ENCODE measurements at regions of chr6 and their contacts with region 1.

Region 1: DNA sequence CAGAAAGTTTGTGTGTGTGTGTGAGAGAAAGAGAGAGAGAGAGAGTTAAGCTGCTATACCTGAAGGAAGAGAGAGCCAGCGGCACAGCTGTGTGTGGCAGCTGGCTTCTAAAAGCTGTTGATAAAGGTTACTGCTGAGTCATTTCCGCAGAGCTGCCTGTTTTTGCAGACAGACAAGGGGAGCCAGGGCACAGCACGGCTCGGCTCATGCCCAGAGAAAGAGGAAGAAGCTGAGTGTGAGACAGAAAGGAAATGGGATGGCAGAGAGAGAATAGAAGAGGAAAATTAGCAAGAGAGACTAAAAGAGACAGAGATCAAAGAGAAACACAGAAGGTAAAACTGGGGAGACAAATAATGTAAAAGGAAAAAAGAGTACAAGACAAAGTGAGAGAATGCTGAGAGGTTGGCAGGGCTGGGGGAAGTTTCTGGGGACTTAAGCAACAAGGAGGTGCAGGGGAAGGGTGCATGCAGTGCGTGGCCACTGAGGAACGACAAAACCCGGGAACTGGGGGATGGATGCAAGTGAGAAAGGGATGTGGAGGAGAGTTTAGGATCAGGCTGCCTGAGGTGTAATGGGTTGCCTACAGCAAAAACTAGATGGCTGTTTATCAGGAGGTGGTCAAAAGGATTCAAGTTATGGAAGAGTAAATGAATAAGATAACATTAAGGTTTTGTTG is 22.7 kb downstream of the HLA-A start:
- DNase-seq: peak in 8 of 9 donors; percentile 55 to 89 (median 82)
- ATAC-seq: peak; percentile 97
- H3K4me3 ChIP-seq: peak overlapping the region; percentile 52
- H3K4me3 Mint-ChIP-seq: peak overlapping the region; percentile 73 to 96 (median 84)
- H3K27ac ChIP-seq: peak overlapping the region; percentile 52
- H3K27ac Mint-ChIP-seq: peak overlapping the region; percentile 77 to 94 (median 90)
- H3K4me1 ChIP-seq: peaks cover 22 to 30% of the 10 kb centered on the region in 2 donors
- H3K4me1 Mint-ChIP-seq: peaks cover 32 to 51% (median 46%) of the 10 kb centered on the region in 7 donors
- H3K27me3 ChIP-seq: no peaks in the 10 kb centered on the region
- H3K27me3 Mint-ChIP-seq: peaks cover 0 to 2% (median 0%) of the 10 kb centered on the region in 5 donors

Region 2: GRCh38 chr6:29705389-29706231 is 259.4 kb before region 1 on chr6:
- CTCF ChIA-PET with region 1: no interaction called
- POLR2A ChIA-PET with region 1: interaction called, 5 read pairs
- intact Hi-C with region 1: loop called (anchors 1 to 5 kb)
- DNase-seq: peak in 4 of 9 donors; percentile 41 to 60 (median 43)
- ATAC-seq: no peak
- H3K4me3 ChIP-seq: no peak overlapping the region
- H3K4me3 Mint-ChIP-seq: peak overlapping the region in 6 of 10 donors; percentile 20 to 77 (median 42)
- H3K27ac ChIP-seq: peak overlapping the region; percentile 2
- H3K27ac Mint-ChIP-seq: peak overlapping the region in 8 of 9 donors; percentile 16 to 95 (median 82)
- H3K4me1 ChIP-seq: peaks cover 47 to 54% of the 10 kb centered on the region in 2 donors
- H3K4me1 Mint-ChIP-seq: peaks cover 21 to 59% (median 51%) of the 10 kb centered on the region in 7 donors
- H3K27me3 ChIP-seq: no peaks in the 10 kb centered on the region
- H3K27me3 Mint-ChIP-seq: peaks cover 4 to 37% (median 8%) of the 10 kb centered on the region in 5 donors

Region 3: DNA sequence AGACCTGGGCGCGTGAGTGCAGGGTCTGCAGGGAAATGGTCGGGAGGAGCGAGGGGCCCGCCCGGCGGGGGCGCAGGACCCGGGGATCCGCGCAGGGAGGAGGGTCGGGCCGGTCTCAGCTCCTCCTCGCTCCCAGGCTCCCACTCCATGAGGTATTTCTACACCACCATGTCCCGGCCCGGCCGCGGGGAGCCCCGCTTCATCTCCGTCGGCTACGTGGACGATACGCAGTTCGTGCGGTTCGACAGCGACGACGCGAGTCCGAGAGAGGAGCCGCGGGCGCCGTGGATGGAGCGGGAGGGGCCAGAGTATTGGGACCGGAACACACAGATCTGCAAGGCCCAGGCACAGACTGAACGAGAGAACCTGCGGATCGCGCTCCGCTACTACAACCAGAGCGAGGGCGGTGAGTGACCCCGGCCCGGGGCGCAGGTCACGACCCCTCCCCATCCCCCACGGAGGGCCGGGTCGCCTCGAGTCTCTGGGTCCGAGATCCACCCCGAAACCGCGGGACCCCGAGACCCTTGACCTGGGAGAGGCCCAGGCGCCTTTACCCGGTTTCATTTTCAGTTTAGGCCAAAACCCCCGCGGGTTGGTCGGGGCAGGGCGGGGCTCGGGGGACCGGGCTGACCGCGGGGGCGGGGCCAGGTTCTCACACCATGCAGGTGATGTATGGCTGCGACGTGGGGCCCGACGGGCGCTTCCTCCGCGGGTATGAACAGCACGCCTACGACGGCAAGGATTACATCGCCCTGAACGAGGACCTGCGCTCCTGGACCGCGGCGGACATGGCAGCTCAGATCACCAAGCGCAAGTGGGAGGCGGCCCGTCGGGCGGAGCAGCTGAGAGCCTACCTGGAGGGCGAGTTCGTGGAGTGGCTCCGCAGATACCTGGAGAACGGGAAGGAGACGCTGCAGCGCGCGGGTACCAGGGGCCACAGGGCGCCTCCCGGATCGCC is 76.9 kb before region 1 on chr6:
- CTCF ChIA-PET with region 1: interaction called, 3 read pairs
- POLR2A ChIA-PET with region 1: interaction called, 11 read pairs
- intact Hi-C with region 1: loop called (anchors 1 kb)
- DNase-seq: peak in 8 of 9 donors; percentile 36 to 89 (median 72)
- ATAC-seq: peak; percentile 91
- H3K4me3 ChIP-seq: peak overlapping the region; percentile 73
- H3K4me3 Mint-ChIP-seq: peak overlapping the region in 9 of 10 donors; percentile 79 to 95 (median 94)
- H3K27ac ChIP-seq: peak overlapping the region; percentile 94
- H3K27ac Mint-ChIP-seq: peak overlapping the region in 8 of 9 donors; percentile 72 to 98 (median 94)
- H3K4me1 ChIP-seq: peaks cover 3 to 7% of the 10 kb centered on the region in 2 donors
- H3K4me1 Mint-ChIP-seq: peaks cover 0 to 27% (median 20%) of the 10 kb centered on the region in 7 donors
- H3K27me3 ChIP-seq: no peaks in the 10 kb centered on the region
- H3K27me3 Mint-ChIP-seq: peaks cover 0 to 18% (median 0%) of the 10 kb centered on the region in 5 donors

Region 4: DNA sequence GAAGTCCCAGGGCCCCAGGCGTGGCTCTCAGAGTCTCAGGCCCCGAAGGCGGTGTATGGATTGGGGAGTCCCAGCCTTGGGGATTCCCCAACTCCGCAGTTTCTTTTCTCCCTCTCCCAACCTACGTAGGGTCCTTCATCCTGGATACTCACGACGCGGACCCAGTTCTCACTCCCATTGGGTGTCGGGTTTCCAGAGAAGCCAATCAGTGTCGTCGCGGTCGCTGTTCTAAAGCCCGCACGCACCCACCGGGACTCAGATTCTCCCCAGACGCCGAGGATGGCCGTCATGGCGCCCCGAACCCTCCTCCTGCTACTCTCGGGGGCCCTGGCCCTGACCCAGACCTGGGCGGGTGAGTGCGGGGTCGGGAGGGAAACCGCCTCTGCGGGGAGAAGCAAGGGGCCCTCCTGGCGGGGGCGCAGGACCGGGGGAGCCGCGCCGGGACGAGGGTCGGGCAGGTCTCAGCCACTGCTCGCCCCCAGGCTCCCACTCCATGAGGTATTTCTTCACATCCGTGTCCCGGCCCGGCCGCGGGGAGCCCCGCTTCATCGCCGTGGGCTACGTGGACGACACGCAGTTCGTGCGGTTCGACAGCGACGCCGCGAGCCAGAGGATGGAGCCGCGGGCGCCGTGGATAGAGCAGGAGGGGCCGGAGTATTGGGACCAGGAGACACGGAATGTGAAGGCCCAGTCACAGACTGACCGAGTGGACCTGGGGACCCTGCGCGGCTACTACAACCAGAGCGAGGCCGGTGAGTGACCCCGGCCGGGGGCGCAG is 22.6 kb before region 1 on chr6 and contains the start of gene HLA-A:
- CTCF ChIA-PET with region 1: interaction called, 7 read pairs
- POLR2A ChIA-PET with region 1: interaction called, 251 read pairs
- intact Hi-C with region 1: loop called (anchors 1 kb)
- DNase-seq: peak; percentile 76 to 97 (median 92)
- ATAC-seq: peak; percentile 91
- H3K4me3 ChIP-seq: peak within 1 kb of the TSS; percentile 98
- H3K4me3 Mint-ChIP-seq: peak within 1 kb of the TSS; percentile 87 to 99 (median 97)
- H3K27ac ChIP-seq: peak within 1 kb of the TSS; percentile 99
- H3K27ac Mint-ChIP-seq: peak within 1 kb of the TSS; percentile 99 to 100 (median 100)
- H3K4me1 ChIP-seq: peaks cover 24 to 35% of the 10 kb centered on the region in 2 donors
- H3K4me1 Mint-ChIP-seq: peaks cover 32 to 52% (median 47%) of the 10 kb centered on the region in 7 donors
- H3K27me3 ChIP-seq: no peaks in the 10 kb centered on the region
- H3K27me3 Mint-ChIP-seq: peaks cover 0 to 6% (median 0%) of the 10 kb centered on the region in 5 donors
- total RNA-seq, gene HLA-A: 1,540 to 2,258 (median 1,836) TPM

Region 5: DNA sequence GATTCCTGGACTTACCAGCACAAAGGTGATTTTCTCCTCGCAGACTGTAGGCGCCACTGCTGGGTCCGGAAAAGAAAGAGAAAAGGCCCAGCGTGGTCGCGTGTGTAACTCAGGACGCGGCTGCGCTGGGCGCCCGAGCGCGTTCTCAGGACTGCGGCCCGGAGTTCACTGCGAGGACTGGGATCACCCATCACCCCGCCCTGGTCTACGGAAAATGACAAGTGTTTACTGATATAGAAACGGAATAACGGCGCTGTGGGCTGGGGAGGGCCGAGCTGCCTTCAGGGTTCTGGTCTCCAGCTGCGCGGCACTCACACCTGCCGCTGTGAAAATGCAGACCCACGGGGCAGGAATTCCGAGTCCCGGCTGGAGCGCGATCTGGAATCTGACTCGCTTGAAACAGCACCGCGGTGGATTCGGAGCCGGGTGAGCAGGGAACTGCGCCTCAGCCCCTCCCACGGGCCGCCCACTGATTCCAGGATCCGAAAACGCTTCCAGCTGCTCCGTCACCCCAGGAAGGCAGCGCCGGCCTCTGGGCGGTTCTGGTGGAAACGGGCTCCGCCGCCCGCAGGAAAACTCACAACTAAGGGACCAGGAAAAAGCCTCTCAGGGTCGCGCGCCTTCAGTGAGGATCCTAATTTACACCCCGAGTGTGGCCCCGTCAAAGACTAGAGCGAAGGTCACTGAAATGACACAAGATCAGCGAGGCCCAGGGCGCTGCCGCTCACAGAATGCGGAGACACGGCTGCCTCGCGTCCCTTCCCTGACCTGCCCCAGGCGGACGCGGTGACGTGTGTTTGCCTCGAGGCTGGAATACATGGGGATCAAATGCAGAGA is 11.8 kb after region 1 on chr6:
- CTCF ChIA-PET with region 1: interaction called, 4 read pairs
- POLR2A ChIA-PET with region 1: interaction called, 28 read pairs
- intact Hi-C with region 1: loop called (anchors 1 kb)
- DNase-seq: peak in 8 of 9 donors; percentile 27 to 60 (median 42)
- ATAC-seq: peak; percentile 87
- H3K4me3 ChIP-seq: peak overlapping the region; percentile 60
- H3K4me3 Mint-ChIP-seq: peak overlapping the region; percentile 87 to 96 (median 92)
- H3K27ac ChIP-seq: no peak overlapping the region
- H3K27ac Mint-ChIP-seq: peak overlapping the region in 4 of 9 donors; percentile 0 to 51 (median 26)
- H3K4me1 ChIP-seq: peaks cover 15 to 21% of the 10 kb centered on the region in 2 donors
- H3K4me1 Mint-ChIP-seq: peaks cover 38 to 46% (median 42%) of the 10 kb centered on the region in 7 donors
- H3K27me3 ChIP-seq: peaks cover 6 to 12% of the 10 kb centered on the region in 2 donors
- H3K27me3 Mint-ChIP-seq: peaks cover 36 to 74% (median 53%) of the 10 kb centered on the region in 5 donors

Region 6: GRCh38 chr6:30066577-30067459 is 101.8 kb after region 1 on chr6 and contains the start of gene PPP1R11:
- CTCF ChIA-PET with region 1: no interaction called
- POLR2A ChIA-PET with region 1: interaction called, 10 read pairs
- intact Hi-C with region 1: loop called in 1 of 2 experiments (anchors 1 kb)
- DNase-seq: peak; percentile 84 to 100 (median 99)
- ATAC-seq: peak; percentile 99
- H3K4me3 ChIP-seq: peak within 1 kb of the TSS; percentile 94
- H3K4me3 Mint-ChIP-seq: peak within 1 kb of the TSS; percentile 87 to 100 (median 98)
- H3K27ac ChIP-seq: peak within 1 kb of the TSS; percentile 96
- H3K27ac Mint-ChIP-seq: peak within 1 kb of the TSS; percentile 96 to 100 (median 99)
- H3K4me1 ChIP-seq: peaks cover 28 to 41% of the 10 kb centered on the region in 2 donors
- H3K4me1 Mint-ChIP-seq: peaks cover 43 to 77% (median 71%) of the 10 kb centered on the region in 7 donors
- H3K27me3 ChIP-seq: no peaks in the 10 kb centered on the region
- H3K27me3 Mint-ChIP-seq: peaks cover 10 to 22% (median 16%) of the 10 kb centered on the region in 5 donors
- total RNA-seq, gene PPP1R11: 49.4 to 67.1 (median 62.7) TPM

Region 7: DNA sequence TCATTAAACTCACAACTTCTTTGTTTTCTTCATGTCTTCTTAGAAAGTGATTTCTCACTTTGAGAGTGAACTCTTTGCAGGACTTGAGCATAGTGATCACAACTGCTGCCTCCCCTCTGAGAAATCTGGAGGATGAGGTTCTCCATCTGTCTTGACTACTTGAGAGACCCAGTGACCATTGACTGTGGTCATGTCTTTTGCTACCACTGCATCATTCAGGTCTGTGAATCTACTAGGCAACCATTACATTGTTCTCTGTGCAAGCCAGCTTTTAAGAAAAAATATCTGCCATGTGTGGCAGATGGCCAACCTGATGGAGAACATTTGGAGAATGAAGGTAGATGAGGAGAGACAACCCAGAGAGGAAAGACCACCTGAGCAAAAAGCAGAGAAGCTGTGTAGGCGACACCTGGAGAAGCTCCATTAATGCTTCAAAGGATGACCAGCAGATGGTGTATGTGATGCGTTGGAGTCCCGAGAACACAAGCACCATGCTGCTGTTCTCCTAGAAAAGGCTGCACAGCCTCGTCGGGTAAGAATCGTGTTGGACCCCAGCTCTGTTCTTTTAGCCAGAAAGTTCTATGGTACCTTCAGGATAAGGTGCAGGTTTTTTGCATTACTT is 273.3 kb after region 1 on chr6:
- CTCF ChIA-PET with region 1: no interaction called
- POLR2A ChIA-PET with region 1: no interaction called
- intact Hi-C with region 1: no loop called
- DNase-seq: peak in 5 of 9 donors; percentile 8 to 36 (median 27)
- ATAC-seq: peak; percentile 62
- H3K4me3 ChIP-seq: no peak overlapping the region
- H3K4me3 Mint-ChIP-seq: no peak overlapping the region
- H3K27ac ChIP-seq: no peak overlapping the region
- H3K27ac Mint-ChIP-seq: no peak overlapping the region
- H3K4me1 ChIP-seq: no peaks in the 10 kb centered on the region
- H3K4me1 Mint-ChIP-seq: peaks cover 0 to 4% (median 0%) of the 10 kb centered on the region in 7 donors
- H3K27me3 ChIP-seq: peaks cover 0 to 3% of the 10 kb centered on the region in 2 donors
- H3K27me3 Mint-ChIP-seq: peaks cover 18 to 59% (median 32%) of the 10 kb centered on the region in 5 donors

Measured in naive thymus-derived CD4-positive, alpha-beta T cell (primary cell).